Activated CD4-positive, alpha-beta memory T cell treated with anti-CD3 and anti-CD28 coated beads, Interleukin-2, amount 10 ng/mL, durations not matched to agents 7 days and 5 days (primary cell): ENCODE measurements at regions of chr6 and their contacts with region 1.

Region 1: DNA sequence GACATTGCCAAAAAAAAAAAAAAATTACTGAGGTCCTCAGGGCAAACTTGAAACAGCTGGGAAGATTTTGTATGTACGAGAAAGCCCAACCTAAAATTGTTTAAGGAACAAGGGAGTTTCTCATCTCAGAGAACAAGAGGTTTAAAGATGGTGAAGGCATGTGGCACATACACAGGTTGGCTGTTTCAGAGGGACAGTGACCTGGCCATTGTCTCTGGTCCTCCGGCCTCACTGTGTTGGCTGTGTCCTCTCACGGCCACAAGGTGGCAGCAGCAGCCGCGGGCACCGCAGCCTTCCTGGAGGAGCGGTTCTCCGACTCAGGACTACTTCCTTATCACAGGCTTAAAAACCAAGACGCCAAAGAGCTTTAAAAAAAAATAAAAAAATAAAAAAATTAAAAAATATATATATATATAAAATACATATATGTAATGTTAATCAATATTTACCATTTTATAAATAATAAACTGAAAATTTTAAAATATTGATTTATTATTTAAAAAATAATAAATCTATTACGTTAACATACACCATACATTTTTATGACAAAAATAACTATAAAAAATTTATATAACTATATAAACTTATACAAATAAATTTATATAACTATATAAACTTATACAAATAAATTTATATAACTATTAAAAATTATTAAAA is 52.8 kb downstream of the GTF2H5 start:
- DNase-seq: peak; percentile 80
- H3K4me3 Mint-ChIP-seq: no peak overlapping the region
- H3K27ac Mint-ChIP-seq: no peak overlapping the region
- H3K4me1 Mint-ChIP-seq: peaks cover 3% of the 10 kb centered on the region
- H3K27me3 Mint-ChIP-seq: peaks cover 3% of the 10 kb centered on the region

Region 2: GRCh38 chr6:158207422-158207788 is 13.5 kb before region 1 on chr6:
- CTCF ChIA-PET with region 1: interaction called, 12 read pairs
- POLR2A ChIA-PET with region 1: no interaction called
- DNase-seq: peak; percentile 55
- H3K4me3 Mint-ChIP-seq: peak overlapping the region; percentile 35
- H3K27ac Mint-ChIP-seq: peak overlapping the region; percentile 85
- H3K4me1 Mint-ChIP-seq: peaks cover 43% of the 10 kb centered on the region
- H3K27me3 Mint-ChIP-seq: no peaks in the 10 kb centered on the region

Region 3: DNA sequence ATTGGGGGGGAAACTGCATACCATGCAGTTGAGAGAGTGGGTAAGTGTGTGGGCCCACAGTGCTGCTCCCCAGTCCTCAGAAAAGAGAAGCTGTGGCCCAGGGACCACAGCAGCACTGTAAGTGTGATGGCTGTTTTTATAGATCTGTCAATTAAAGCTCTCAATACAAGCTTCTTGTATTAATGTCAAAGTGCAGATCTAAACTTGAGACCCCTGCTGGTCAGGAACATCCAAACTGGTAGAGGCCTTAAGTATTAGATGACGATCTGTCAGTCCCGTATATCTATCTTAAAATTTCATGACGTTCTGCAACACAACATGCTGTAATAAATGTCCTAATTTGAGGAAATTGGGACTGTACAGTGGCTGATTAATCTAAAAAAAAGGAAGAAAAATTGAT is 166.1 kb after region 1 on chr6:
- CTCF ChIA-PET with region 1: interaction called, 42 read pairs
- POLR2A ChIA-PET with region 1: no interaction called
- DNase-seq: no peak
- H3K4me3 Mint-ChIP-seq: no peak overlapping the region
- H3K27ac Mint-ChIP-seq: no peak overlapping the region
- H3K4me1 Mint-ChIP-seq: no peaks in the 10 kb centered on the region
- H3K27me3 Mint-ChIP-seq: no peaks in the 10 kb centered on the region

Region 4: GRCh38 chr6:158595223-158595622 is 374.3 kb after region 1 on chr6:
- CTCF ChIA-PET with region 1: interaction called, 10 read pairs
- POLR2A ChIA-PET with region 1: no interaction called
- DNase-seq: no peak
- H3K4me3 Mint-ChIP-seq: no peak overlapping the region
- H3K27ac Mint-ChIP-seq: no peak overlapping the region
- H3K4me1 Mint-ChIP-seq: no peaks in the 10 kb centered on the region
- H3K27me3 Mint-ChIP-seq: no peaks in the 10 kb centered on the region

Region 5: GRCh38 chr6:158686791-158687381 is 466.0 kb after region 1 on chr6:
- CTCF ChIA-PET with region 1: interaction called, 29 read pairs
- POLR2A ChIA-PET with region 1: no interaction called
- DNase-seq: peak; percentile 47
- H3K4me3 Mint-ChIP-seq: no peak overlapping the region
- H3K27ac Mint-ChIP-seq: peak overlapping the region; percentile 73
- H3K4me1 Mint-ChIP-seq: peaks cover 58% of the 10 kb centered on the region
- H3K27me3 Mint-ChIP-seq: no peaks in the 10 kb centered on the region